Heart left ventricle (tissue), 16 donors: ENCODE measurements at regions of chr2 and their contacts with region 1.

Region 1: GRCh38 chr2:86298411-86299379 is 38.7 kb downstream of the REEP1 start:
- DNase-seq: no peak
- ATAC-seq: peak; percentile 47 to 67 (median 58)
- H3K4me3 ChIP-seq: no peak overlapping the region
- H3K27ac ChIP-seq: peak overlapping the region in 8 of 12 donors; percentile 9 to 76 (median 44)
- H3K4me1 ChIP-seq: peaks cover 0 to 58% (median 38%) of the 10 kb centered on the region in 12 donors
- H3K27me3 ChIP-seq: no peaks in the 10 kb centered on the region
- CTCF ChIP-seq: peak; percentile 8 to 68 (median 50)
- POLR2A ChIP-seq: no peak

Region 2: DNA sequence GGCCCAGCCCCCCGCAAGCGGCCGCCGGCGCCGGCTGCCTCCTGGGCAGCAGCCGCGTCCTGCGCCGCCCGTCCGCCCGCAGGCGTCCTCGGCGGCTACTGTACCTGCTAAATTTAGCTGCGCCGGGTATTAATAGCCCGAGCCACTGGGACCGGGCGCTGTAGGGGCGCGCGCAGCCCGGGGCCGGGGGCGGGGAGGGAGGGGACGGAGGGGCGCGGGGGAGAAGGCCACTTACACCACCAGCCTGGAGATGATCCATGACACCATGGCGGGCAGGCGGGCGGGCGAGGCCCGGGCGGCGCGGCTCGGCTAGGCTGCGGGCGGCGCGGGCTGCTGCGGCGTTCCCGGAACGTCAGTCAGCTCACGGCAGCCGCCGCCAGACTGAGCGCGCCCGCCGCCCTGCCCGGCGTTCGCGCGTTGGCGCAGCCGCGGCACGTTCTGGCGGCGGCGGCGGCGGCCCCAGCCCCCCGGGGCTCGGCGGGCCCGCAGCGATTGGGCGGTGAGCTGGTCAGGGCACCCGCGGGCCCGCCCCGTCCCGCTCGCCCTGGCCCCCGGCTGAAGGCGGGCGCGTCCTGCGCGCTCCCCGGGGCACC is 38.6 kb after region 1 on chr2 and contains the start of gene REEP1:
- intact Hi-C with region 1: loop called in 1 of 10 experiments (anchors 2 kb)
- DNase-seq: peak; percentile 56 to 71 (median 65)
- ATAC-seq: peak; percentile 71 to 93 (median 88)
- H3K4me3 ChIP-seq: peak within 1 kb of the TSS; percentile 42 to 86 (median 61)
- H3K27ac ChIP-seq: peak within 1 kb of the TSS; percentile 58 to 90 (median 78)
- H3K4me1 ChIP-seq: peaks cover 0 to 32% (median 10%) of the 10 kb centered on the region in 12 donors
- H3K27me3 ChIP-seq: peaks cover 0 to 47% (median 6%) of the 10 kb centered on the region in 9 donors
- CTCF ChIP-seq: no peak
- POLR2A ChIP-seq: peak in 1 of 2 donors; percentile 38
- total RNA-seq, gene REEP1: 16.0 to 43.4 (median 27.6) TPM

Region 3: DNA sequence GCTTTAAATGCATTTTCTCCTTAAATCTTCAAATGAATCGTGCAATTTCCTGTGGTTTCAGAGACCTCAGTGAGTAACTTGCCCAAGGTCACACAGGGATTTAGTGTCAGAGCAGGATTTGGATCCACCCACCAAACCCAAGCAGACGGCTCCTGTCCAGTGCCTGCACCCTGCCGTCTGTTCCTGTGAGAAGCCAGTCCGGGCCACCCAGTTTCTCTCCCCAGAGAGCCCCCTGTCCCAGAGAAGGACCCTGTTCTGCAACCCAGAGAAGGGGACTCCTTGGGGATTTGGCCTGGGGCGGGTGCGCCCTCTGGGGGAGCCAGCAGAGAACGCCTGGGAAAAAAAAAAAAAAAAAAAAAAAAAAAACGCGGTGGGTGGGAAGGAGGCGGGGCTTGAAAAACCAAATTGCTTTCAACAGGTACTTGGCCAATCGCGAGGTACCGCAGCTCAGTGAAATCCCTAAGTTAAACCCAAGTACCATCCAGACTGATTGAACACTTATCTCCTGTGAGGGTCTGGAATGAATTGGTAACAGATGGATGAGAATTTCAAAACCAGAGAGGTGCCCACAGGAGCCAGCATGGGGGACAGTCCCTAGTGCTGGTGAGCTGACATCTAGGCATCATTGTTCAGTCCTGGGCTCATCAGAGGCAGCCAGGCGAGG is 69.6 kb after region 1 on chr2:
- intact Hi-C with region 1: loop called in 9 of 10 experiments (anchors 2 to 5 kb)
- DNase-seq: peak in 4 of 5 donors; percentile 25 to 66 (median 41)
- ATAC-seq: peak; percentile 37 to 64 (median 56)
- H3K4me3 ChIP-seq: peak overlapping the region in 2 of 12 donors; percentile 10 to 22
- H3K27ac ChIP-seq: no peak overlapping the region
- H3K4me1 ChIP-seq: peaks cover 0 to 21% (median 4%) of the 10 kb centered on the region in 12 donors
- H3K27me3 ChIP-seq: no peaks in the 10 kb centered on the region
- CTCF ChIP-seq: peak; percentile 44 to 74 (median 63)
- POLR2A ChIP-seq: no peak

Region 4: DNA sequence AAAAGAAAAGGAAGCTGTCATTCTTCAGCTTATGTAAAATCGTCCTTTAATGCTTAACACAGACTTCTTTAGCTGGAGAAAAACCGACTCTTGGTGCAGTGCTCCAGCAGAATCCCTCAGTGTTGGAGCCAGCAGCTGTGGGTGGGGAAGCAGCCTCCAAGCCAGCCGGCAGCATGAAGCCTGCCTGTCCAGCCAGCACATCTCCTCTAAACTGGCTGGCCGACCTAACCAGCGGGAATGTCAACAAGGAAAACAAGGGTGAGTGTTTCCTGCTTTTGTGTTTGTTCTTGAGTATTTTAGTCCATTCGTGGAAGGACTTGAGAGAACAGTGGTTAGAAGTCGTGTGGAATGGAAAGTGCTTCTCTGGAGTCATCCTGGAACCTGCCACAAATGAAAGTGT is 181.4 kb after region 1 on chr2:
- intact Hi-C with region 1: no loop called
- DNase-seq: peak; percentile 12 to 65 (median 35)
- ATAC-seq: peak; percentile 57 to 69 (median 58)
- H3K4me3 ChIP-seq: no peak overlapping the region
- H3K27ac ChIP-seq: peak overlapping the region in 5 of 12 donors; percentile 9 to 62 (median 18)
- H3K4me1 ChIP-seq: peaks cover 3 to 60% (median 27%) of the 10 kb centered on the region in 12 donors
- H3K27me3 ChIP-seq: no peaks in the 10 kb centered on the region
- CTCF ChIP-seq: no peak
- POLR2A ChIP-seq: no peak